HEK293 (cell line): ENCODE measurements at regions of chr6 and their contacts with region 1.

Region 1: DNA sequence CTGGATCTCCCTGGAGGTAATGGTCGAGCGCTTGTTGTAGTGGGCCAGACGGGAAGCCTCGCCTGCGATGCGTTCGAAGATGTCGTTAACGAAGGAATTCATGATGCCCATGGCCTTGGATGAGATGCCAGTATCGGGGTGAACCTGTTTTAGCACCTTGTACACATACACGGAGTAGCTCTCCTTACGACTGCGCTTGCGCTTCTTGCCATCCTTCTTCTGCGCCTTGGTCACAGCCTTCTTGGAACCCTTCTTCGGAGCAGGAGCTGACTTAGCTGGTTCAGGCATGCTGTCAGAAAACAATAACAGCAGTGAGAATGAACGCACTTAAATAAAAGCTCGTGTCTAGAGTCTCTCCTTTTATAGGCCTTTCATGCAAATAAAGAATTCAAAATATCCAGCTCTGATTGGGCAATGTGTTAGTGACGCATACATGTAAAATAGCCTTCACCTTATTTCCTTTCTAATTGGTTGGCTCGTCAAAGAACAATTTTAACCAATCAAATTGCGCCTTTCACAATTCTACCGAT is 129.2 kb downstream of the HFE start:
- H3K4me3 ChIP-seq: peak overlapping the region; percentile 70
- H3K27ac ChIP-seq: no peak overlapping the region
- H3K4me1 ChIP-seq: no peaks in the 10 kb centered on the region
- CTCF ChIP-seq: no peak

Region 2: DNA sequence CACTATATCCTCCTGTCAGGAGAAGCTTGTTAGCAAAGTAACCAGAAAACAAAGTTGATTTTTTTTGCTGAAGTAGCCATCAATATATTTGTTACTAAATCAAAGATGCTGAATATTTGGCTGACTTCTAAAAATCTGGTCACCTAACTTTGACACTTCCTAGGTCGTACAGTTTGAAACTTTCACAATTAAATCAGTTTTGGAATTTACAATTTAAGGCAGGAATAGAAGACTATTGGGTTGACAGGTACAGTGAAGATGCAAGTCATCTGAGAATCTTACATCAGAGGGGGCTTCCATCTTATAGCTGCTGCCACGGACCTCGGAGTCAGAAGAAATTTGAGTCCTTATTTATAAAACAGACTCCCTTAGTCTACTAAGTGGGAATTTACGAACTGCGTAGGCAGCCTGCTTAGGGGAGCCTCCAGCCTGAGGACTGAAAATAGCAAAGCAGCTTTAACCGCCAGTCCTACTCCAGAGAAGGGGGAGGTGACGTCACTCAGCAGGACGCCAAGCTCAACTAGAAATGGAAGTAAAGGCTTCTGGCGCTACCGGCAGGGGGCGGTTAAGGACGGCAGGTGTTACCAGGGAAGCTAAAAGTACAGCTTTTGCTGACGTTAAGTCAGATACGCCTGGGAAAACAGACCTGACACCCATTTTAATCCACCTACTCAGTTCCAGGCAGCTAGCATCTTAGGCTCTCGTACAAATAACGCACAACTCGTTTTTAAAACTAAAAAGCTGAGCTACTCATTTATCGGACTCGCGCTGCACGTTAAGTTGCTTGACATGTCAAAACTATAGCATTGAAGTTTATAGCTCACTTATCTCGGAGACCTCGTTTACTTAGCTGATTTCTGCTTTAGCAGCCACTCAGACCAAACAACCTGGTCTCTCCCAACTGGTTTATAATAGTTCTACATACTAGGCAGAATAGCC is 190.3 kb before region 1 on chr6:
- CTCF ChIA-PET with region 1: no interaction called
- POLR2A ChIA-PET with region 1: interaction called, 43 read pairs
- H3K4me3 ChIP-seq: peak overlapping the region; percentile 48
- H3K27ac ChIP-seq: peak overlapping the region; percentile 47
- H3K4me1 ChIP-seq: peaks cover 18% of the 10 kb centered on the region
- CTCF ChIP-seq: peak; percentile 81

Region 3: DNA sequence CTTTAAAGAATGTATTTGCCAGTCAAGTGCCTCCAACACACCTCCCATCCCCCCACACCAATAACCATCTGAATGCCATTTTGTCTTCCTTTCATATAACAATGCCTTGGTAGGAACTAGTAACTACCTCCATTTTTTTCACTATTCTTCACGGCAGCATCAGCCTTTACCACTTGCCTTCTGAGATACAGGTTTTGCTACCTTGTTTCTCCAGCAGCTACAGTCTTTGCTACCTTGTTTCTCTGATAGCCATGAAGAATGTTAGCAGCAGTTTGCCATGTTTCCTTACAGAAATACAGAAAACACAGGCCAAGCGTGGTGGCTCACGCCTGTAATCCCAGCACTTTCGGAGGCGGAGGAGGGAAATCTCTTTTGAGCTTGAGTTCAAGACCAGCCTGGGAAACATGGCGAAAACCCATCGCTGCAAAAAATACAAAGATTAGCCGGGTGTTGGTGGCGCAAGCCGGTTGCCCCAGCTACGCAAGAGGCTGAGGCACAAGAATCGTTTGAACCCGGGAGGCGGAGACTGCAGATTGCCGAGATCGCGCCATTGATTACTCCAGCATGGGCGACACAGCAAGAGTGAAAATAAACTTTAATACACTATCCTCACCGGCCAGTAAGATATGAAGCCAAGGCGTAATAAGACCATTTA is 28.3 kb before region 1 on chr6:
- CTCF ChIA-PET with region 1: interaction called, 9 read pairs
- POLR2A ChIA-PET with region 1: interaction called, 56 read pairs
- H3K4me3 ChIP-seq: peak overlapping the region; percentile 57
- H3K27ac ChIP-seq: peak overlapping the region; percentile 35; the same call in 1 of the 2 replicates
- H3K4me1 ChIP-seq: no peaks in the 10 kb centered on the region
- CTCF ChIP-seq: no peak

Region 4: DNA sequence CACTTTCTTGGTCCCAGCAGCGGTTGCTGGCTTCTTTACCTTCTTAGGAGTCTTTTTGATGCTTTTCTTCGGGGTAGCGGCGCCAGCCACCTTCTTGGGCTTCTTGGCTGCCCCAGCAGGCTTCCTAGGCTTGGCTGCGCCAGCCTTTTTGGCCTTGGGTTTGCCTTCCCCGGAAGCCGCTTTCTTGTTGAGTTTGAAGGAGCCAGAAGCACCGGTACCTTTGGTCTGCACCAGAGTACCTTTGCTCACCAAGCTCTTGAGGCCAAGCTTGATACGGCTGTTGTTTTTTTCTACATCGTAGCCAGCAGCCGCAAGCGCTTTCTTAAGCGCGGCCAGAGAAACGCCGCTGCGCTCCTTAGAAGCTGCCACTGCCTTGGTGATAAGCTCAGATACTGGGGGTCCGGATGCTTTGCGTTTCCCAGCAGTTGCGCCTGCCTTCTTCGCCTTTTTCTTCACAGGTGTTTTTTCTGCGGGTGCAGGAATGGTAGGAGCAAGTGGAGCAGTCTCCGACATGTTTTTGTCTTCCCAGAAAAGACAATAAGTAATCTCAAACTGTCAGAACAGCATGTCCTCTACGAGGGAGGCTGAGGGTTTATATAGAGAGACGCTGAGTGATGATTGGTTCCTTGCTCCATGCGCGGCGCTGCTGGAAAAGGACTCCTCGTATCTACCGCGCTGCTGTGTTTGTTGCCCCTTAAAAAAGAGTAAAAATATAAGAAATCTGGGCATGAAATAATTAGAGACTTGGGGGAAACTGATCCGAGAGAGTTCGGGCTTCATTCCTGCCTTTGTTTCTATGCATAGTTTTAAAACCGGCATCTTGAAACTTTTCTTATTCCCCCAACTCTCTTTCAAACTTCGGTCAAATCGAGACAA is 18.2 kb after region 1 on chr6:
- CTCF ChIA-PET with region 1: no interaction called
- POLR2A ChIA-PET with region 1: interaction called, 30 read pairs
- H3K4me3 ChIP-seq: peak overlapping the region; percentile 45
- H3K27ac ChIP-seq: peak overlapping the region; percentile 8; the same call in 1 of the 2 replicates
- H3K4me1 ChIP-seq: no peaks in the 10 kb centered on the region
- CTCF ChIP-seq: no peak

Region 5: DNA sequence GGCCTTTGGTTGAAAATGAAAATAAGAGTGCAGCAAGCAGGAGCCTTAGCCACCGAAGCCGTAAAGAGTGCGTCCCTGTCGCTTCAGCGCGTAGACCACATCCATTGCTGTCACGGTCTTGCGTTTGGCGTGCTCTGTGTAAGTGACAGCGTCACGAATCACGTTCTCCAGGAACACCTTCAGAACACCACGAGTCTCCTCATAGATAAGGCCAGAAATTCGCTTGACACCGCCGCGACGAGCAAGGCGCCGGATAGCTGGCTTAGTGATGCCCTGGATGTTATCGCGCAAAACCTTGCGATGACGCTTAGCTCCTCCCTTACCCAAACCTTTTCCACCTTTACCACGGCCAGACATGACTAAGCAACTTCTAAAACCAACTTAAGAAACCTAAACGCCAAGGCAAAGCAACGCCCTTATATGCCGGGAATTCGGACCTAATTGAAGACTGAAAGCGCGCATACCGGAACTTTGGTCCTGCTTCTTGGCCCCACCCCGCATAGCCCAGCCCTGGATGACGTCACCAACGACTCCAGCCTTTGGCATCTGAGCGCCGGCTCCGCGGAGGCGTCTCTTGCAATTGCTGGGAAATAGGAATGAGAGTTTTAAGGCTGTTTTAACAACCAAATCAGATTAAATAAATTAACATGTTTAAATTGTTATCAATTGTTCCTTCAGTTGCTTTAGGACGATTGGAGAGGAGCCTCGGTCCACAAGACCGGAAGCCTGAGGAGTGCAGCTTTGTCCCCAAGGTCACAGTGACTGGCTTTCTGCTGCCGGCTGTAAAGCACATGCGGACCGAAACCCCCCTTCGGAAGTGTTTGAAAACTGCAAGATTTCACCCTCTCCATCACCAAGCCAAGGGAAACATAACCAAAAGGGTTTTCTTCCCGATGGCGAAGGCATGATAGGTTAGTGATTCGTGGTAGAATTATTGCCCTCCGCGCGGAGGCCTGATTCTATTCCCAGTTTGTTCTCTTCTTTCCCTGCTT is 69.0 kb after region 1 on chr6:
- CTCF ChIA-PET with region 1: interaction called, 3 read pairs
- POLR2A ChIA-PET with region 1: interaction called, 52 read pairs
- H3K4me3 ChIP-seq: peak overlapping the region; percentile 67
- H3K27ac ChIP-seq: peak overlapping the region; percentile 65
- H3K4me1 ChIP-seq: no peaks in the 10 kb centered on the region
- CTCF ChIP-seq: no peak

Region 6: DNA sequence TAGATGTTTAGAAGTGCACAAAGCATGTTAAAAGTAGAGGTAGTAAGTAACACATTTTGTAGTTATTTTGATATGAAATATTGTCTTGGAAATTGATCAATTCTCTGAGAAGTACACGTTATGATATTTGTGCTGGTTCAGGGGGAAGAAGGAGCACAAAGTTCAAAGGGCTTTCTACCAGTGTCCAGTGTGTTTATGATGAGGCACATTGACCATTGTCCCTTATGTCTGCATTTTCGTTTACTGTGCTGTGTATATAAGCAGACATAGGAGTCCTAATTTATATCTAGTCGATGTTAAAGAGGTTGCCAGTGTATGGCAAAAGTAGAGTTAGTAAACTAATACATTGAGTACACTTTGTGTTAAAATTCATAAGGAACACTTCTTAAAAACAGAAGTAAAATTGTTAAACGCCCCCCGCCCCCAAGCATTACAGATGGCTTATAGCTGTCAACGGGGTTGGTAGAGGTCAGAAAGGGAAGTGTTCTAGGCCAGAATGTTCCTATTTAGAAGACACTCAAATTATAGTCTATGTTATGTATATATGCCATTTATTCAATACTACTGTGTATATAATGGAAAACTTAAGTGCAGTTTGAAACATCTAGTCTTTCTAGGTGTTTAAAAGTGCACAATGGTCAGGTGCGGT is 308.4 kb after region 1 on chr6:
- CTCF ChIA-PET with region 1: no interaction called
- POLR2A ChIA-PET with region 1: no interaction called
- H3K4me3 ChIP-seq: no peak overlapping the region
- H3K27ac ChIP-seq: no peak overlapping the region
- H3K4me1 ChIP-seq: 0 out of 2 replicates have a peak, but pooled peaks cover 2% of the 10 kb centered on the region
- CTCF ChIP-seq: no peak

Region 7: GRCh38 chr6:27132532-27133280 is 916.3 kb after region 1 on chr6:
- CTCF ChIA-PET with region 1: no interaction called
- POLR2A ChIA-PET with region 1: interaction called, 12 read pairs
- H3K4me3 ChIP-seq: peak overlapping the region; percentile 71
- H3K27ac ChIP-seq: peak overlapping the region; percentile 95
- H3K4me1 ChIP-seq: peaks cover 10% of the 10 kb centered on the region
- CTCF ChIP-seq: no peak